ENCODE measurements at regions of chr16 and their contacts with region 1.

Region 1: GRCh38 chr16:85461814-85462713 is 151.1 kb upstream of the GSE1 start:
- DNase-seq: no peak
- ATAC-seq: peak; percentile 65
- H3K4me3 ChIP-seq: peak overlapping the region; percentile 50
- H3K4me3 Mint-ChIP-seq: peak overlapping the region; percentile 47 to 93 (median 87)
- H3K27ac ChIP-seq: no peak overlapping the region
- H3K27ac Mint-ChIP-seq: peak overlapping the region in 1 of 9 donors; percentile 58
- H3K4me1 ChIP-seq: peaks cover 0 to 11% of the 10 kb centered on the region in 2 donors
- H3K4me1 Mint-ChIP-seq: peaks cover 3 to 15% (median 9%) of the 10 kb centered on the region in 7 donors
- H3K27me3 ChIP-seq: peaks cover 0 to 3% of the 10 kb centered on the region in 2 donors
- H3K27me3 Mint-ChIP-seq: peaks cover 14 to 41% (median 19%) of the 10 kb centered on the region in 5 donors

Region 2: GRCh38 chr16:85420501-85421337 is 41.3 kb before region 1 on chr16:
- CTCF ChIA-PET with region 1: no interaction called
- POLR2A ChIA-PET with region 1: no interaction called
- intact Hi-C with region 1: loop called in 1 of 2 experiments (anchors 5 kb)
- DNase-seq: peak; percentile 29 to 90 (median 71)
- ATAC-seq: peak; percentile 95
- H3K4me3 ChIP-seq: no peak overlapping the region
- H3K4me3 Mint-ChIP-seq: no peak overlapping the region
- H3K27ac ChIP-seq: no peak overlapping the region
- H3K27ac Mint-ChIP-seq: no peak overlapping the region
- H3K4me1 ChIP-seq: peaks cover 0 to 10% of the 10 kb centered on the region in 2 donors
- H3K4me1 Mint-ChIP-seq: peaks cover 0 to 10% (median 0%) of the 10 kb centered on the region in 7 donors
- H3K27me3 ChIP-seq: no peaks in the 10 kb centered on the region
- H3K27me3 Mint-ChIP-seq: peaks cover 0 to 4% (median 0%) of the 10 kb centered on the region in 5 donors

Region 3: GRCh38 chr16:85503679-85504231 is 41.7 kb after region 1 on chr16:
- CTCF ChIA-PET with region 1: no interaction called
- POLR2A ChIA-PET with region 1: no interaction called
- intact Hi-C with region 1: no loop called
- DNase-seq: no peak
- ATAC-seq: no peak
- H3K4me3 ChIP-seq: no peak overlapping the region
- H3K4me3 Mint-ChIP-seq: no peak overlapping the region
- H3K27ac ChIP-seq: no peak overlapping the region
- H3K27ac Mint-ChIP-seq: no peak overlapping the region
- H3K4me1 ChIP-seq: no peaks in the 10 kb centered on the region
- H3K4me1 Mint-ChIP-seq: no peaks in the 10 kb centered on the region
- H3K27me3 ChIP-seq: no peaks in the 10 kb centered on the region
- H3K27me3 Mint-ChIP-seq: no peaks in the 10 kb centered on the region